ENCODE measurements at regions of chr6 and their contacts with region 1.

Region 1: DNA sequence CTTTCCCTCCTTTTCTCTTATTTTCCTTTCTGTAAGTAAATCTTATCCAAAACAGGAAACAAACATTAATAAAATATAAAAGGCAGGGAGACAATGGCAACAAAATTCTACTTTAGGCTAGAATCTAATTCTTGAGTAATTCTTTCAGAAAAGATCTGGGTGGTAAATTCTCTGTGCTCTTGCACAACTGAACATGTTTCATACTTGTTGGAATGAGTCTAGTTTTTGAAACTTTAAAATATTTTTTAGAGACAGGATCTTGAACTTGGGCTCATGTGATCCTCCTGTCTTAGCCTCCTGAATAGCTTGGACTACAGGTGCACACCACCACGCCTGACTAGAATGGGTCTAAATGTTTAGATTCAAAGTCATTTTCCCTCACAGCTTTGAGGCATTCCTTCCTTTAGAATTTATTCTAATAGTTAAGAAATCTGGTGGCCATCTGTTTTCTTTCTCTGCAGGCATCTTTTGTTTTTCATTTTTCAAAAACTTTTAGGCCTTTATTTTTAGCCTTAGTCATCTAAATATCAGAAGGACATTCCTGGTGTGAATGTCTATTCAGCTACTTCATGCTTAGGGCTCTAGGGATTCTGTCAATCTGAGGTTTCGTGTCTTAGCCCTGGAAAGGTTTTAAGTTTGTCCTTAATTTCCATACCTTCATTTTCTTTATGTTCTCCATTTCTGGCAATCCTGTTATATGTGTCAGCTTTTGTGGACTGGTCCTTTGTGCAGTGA is 76.5 kb downstream of the CDKAL1 start:
- DNase-seq: no peak
- H3K4me3 ChIP-seq: no peak overlapping the region
- H3K27ac ChIP-seq: no peak overlapping the region
- H3K4me1 ChIP-seq: no peaks in the 10 kb centered on the region
- H3K27me3 ChIP-seq: no peaks in the 10 kb centered on the region
- CTCF ChIP-seq: no peak
- POLR2A ChIP-seq: no peak

Region 2: GRCh38 chr6:18985996-18986395 is 1624.8 kb before region 1 on chr6:
- intact Hi-C with region 1: loop called in 1 of 2 experiments (anchors 10 kb)
- DNase-seq: no peak
- H3K4me3 ChIP-seq: no peak overlapping the region
- H3K27ac ChIP-seq: no peak overlapping the region
- H3K4me1 ChIP-seq: no peaks in the 10 kb centered on the region
- H3K27me3 ChIP-seq: no peaks in the 10 kb centered on the region
- CTCF ChIP-seq: no peak
- POLR2A ChIP-seq: no peak